ENCODE measurements at regions of chr5 and their contacts with region 1.

Region 1: GRCh38 chr5:152560512-152561137 is 155.5 kb upstream of the NMUR2 start:
- DNase-seq: peak; percentile 4
- H3K4me3 ChIP-seq: no peak overlapping the region
- H3K27me3 ChIP-seq: no peaks in the 10 kb centered on the region
- CTCF ChIP-seq: peak; percentile 78

Region 2: GRCh38 chr5:152205804-152206203 is 354.8 kb before region 1 on chr5:
- CTCF ChIA-PET with region 1: no interaction called
- POLR2A ChIA-PET with region 1: no interaction called
- DNase-seq: no peak
- H3K4me3 ChIP-seq: no peak overlapping the region
- H3K27me3 ChIP-seq: no peaks in the 10 kb centered on the region
- CTCF ChIP-seq: no peak

Region 3: GRCh38 chr5:152297881-152298280 is 262.7 kb before region 1 on chr5:
- CTCF ChIA-PET with region 1: no interaction called
- POLR2A ChIA-PET with region 1: no interaction called
- DNase-seq: no peak
- H3K4me3 ChIP-seq: no peak overlapping the region
- H3K27me3 ChIP-seq: no peaks in the 10 kb centered on the region
- CTCF ChIP-seq: no peak

Region 4: DNA sequence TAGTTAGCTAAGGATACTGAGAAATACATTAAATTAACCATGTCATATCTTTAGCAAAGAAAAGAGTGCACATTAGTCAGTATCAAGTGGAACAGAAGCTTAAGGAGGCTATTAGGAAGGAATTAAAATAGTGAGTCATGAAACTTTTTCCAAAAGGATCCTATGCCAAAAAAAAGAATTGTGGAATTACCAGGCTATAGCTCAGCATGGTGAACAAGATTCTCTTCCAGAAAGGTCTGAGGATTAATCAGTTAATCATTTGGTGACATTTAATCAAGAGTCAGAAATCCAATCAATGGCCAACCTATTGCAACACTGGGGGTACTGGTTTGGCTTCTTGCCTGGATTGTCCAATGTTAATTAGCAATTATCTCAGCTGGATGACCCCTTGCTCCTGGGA is 89.0 kb after region 1 on chr5:
- CTCF ChIA-PET with region 1: no interaction called
- POLR2A ChIA-PET with region 1: no interaction called
- DNase-seq: no peak
- H3K4me3 ChIP-seq: no peak overlapping the region
- H3K27me3 ChIP-seq: no peaks in the 10 kb centered on the region
- CTCF ChIP-seq: no peak

Region 5: GRCh38 chr5:152711989-152712388 is 151.4 kb after region 1 on chr5:
- CTCF ChIA-PET with region 1: no interaction called
- POLR2A ChIA-PET with region 1: no interaction called
- DNase-seq: no peak
- H3K4me3 ChIP-seq: no peak overlapping the region
- H3K27me3 ChIP-seq: no peaks in the 10 kb centered on the region
- CTCF ChIP-seq: no peak

Region 6: GRCh38 chr5:153490118-153491037 is 929.8 kb after region 1 on chr5 and contains the start of gene GRIA1:
- CTCF ChIA-PET with region 1: no interaction called
- POLR2A ChIA-PET with region 1: interaction called, 29 read pairs
- DNase-seq: no peak
- H3K4me3 ChIP-seq: peak within 1 kb of the TSS; percentile 48
- H3K27me3 ChIP-seq: no peaks in the 10 kb centered on the region
- CTCF ChIP-seq: no peak
- polyA plus RNA-seq, gene GRIA1: 6.7 and 9.9 TPM in 2 replicates

Measured in BJ (cell line).